ENCODE measurements at regions of chr13 and their contacts with region 1.

Region 1: GRCh38 chr13:99606324-99607066 is 105.2 kb downstream of the TM9SF2 start:
- DNase-seq: peak; percentile 94
- H3K4me3 ChIP-seq: peak within 1 kb of the TSS; percentile 71 to 87 (median 86)
- H3K27ac ChIP-seq: peak within 1 kb of the TSS; percentile 82 to 85 (median 83)
- H3K4me1 ChIP-seq: peaks cover 0 to 14% (median 4%) of the 10 kb centered on the region in 4 donors
- H3K27me3 ChIP-seq: no peaks in the 10 kb centered on the region
- CTCF ChIP-seq: no peak
- EP300 ChIP-seq: no peak
- POLR2A ChIP-seq: no peak

Region 2: GRCh38 chr13:98697791-98698190 is 908.7 kb before region 1 on chr13:
- intact Hi-C with region 1: no loop called
- DNase-seq: no peak
- H3K4me3 ChIP-seq: no peak overlapping the region
- H3K27ac ChIP-seq: no peak overlapping the region
- H3K4me1 ChIP-seq: no peaks in the 10 kb centered on the region
- H3K27me3 ChIP-seq: no peaks in the 10 kb centered on the region
- CTCF ChIP-seq: no peak
- EP300 ChIP-seq: no peak
- POLR2A ChIP-seq: no peak

Region 3: GRCh38 chr13:99516153-99516929 is 90.2 kb before region 1 on chr13:
- intact Hi-C with region 1: no loop called
- DNase-seq: no peak
- H3K4me3 ChIP-seq: no peak overlapping the region
- H3K27ac ChIP-seq: no peak overlapping the region
- H3K4me1 ChIP-seq: peaks cover 0 to 21% (median 11%) of the 10 kb centered on the region in 4 donors
- H3K27me3 ChIP-seq: no peaks in the 10 kb centered on the region
- CTCF ChIP-seq: no peak
- EP300 ChIP-seq: no peak
- POLR2A ChIP-seq: no peak

Region 4: DNA sequence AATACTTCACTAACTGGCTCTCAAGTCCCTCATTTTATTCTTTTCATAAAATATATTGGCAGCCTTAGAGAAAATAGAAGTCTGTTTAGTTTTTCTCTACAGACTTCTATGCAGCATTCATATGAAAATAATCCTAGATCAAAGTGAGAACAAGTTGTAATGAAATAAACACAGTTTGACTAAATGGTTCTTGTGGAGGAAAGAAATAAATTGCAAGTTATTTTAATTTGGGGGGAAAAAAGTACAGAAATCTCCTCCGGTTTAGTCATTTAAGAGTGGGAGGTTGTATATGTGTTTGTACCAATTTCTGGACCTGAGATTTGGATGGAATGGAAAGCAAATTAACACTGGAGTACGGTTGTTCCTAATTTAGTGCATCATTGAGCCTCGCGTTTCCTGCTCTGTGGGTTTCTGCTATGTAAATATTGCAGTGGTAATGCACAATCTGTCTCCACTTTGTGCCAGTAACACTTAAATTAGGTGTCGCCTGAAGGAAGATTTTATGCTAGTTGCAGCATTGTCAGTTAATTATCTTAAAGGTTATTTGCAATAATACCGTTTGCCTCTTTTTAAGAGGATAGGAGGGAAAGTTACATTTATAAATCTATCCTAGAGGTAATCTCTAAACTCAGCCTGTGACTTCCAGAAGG is 264.9 kb after region 1 on chr13:
- intact Hi-C with region 1: no loop called
- DNase-seq: no peak
- H3K4me3 ChIP-seq: no peak overlapping the region
- H3K27ac ChIP-seq: no peak overlapping the region
- H3K4me1 ChIP-seq: no peaks in the 10 kb centered on the region
- H3K27me3 ChIP-seq: no peaks in the 10 kb centered on the region
- CTCF ChIP-seq: no peak
- EP300 ChIP-seq: no peak
- POLR2A ChIP-seq: no peak

Region 5: DNA sequence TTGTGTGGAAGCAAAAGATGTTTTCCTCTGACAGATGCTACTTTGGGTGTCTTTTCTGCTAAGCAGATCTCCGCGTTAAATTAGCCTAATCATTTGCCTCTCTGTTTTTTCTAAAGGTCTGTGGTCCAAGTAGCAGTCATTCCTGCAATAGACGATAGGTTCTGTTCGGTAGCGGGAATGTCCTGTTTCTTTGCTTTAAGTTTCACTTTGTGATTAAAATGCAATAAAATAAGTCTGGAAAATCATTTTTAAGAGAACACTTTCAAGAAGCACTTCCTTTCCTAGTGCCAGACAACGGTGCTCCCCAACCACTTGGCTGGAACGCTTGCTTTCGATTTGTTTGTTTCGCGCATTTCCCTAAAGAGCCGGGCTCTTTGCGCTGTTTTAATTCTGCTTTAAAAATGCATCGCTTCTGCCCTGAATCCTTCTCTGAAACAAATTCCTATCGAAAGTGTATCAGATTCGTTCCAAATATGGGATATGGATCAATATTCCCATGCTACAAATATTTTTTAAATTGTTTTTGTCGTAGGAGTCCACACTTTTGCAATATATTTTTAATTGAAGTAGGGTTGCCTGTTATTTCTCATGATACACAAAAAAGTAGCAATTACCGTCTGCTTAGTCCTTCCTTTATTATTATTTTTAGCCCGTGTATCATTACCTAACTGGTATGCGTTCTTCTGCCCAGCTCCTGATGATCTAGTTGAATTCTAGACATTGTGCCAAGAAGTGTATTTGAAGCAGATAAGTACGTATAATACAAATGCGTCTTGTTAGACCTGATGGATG is 389.3 kb after region 1 on chr13:
- intact Hi-C with region 1: loop called (anchors 10 kb)
- DNase-seq: no peak
- H3K4me3 ChIP-seq: no peak overlapping the region
- H3K27ac ChIP-seq: no peak overlapping the region
- H3K4me1 ChIP-seq: peaks cover 0 to 10% (median under 1%) of the 10 kb centered on the region in 4 donors
- H3K27me3 ChIP-seq: peaks cover 47 to 96% (median 79%) of the 10 kb centered on the region in 3 donors
- CTCF ChIP-seq: no peak
- EP300 ChIP-seq: no peak
- POLR2A ChIP-seq: no peak

Region 6: GRCh38 chr13:100088644-100089464 is 482.4 kb after region 1 on chr13 and contains the start of gene PCCA:
- intact Hi-C with region 1: loop called (anchors 5 kb)
- DNase-seq: peak; percentile 97
- H3K4me3 ChIP-seq: peak within 1 kb of the TSS; percentile 75 to 90 (median 77)
- H3K27ac ChIP-seq: peak within 1 kb of the TSS; percentile 79 to 87 (median 82)
- H3K4me1 ChIP-seq: peaks cover 0 to 30% (median 23%) of the 10 kb centered on the region in 4 donors
- H3K27me3 ChIP-seq: no peaks in the 10 kb centered on the region
- CTCF ChIP-seq: no peak
- EP300 ChIP-seq: peak in 1 of 4 donors; percentile 44
- POLR2A ChIP-seq: peak in 1 of 2 donors; percentile 42
- total RNA-seq, gene PCCA: 42.8 to 45.6 (median 45.2) TPM

Measured in sigmoid colon (tissue), 7 donors.